ENCODE measurements at regions of chr2 and their contacts with region 1.

Region 1: DNA sequence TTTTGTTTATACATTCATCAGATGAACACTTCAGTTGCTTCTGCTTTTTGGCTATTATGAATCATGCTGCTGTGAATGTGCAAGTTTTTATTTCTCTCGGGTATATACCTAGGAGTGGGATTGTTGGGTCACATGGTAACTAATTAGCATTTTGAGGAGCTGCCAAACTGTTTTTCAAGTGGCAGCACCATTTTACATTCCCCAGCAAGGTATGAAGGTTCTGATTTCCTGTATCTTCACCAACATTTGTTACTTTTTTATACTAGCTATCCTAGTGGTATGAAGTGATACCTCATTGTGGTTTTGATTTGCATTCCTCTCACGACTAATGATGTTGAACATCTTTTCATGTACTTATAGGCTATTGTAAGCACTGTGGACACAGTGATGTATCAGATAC is 53.9 kb downstream of the DYNC1I2 start:
- DNase-seq: no peak
- H3K4me3 Mint-ChIP-seq: no peak overlapping the region
- H3K27ac Mint-ChIP-seq: no peak overlapping the region
- H3K4me1 Mint-ChIP-seq: peaks cover 11% of the 10 kb centered on the region
- H3K27me3 Mint-ChIP-seq: no peaks in the 10 kb centered on the region

Region 2: GRCh38 chr2:171568089-171568488 is 173.1 kb before region 1 on chr2:
- intact Hi-C with region 1: no loop called
- DNase-seq: no peak
- H3K4me3 Mint-ChIP-seq: no peak overlapping the region
- H3K27ac Mint-ChIP-seq: no peak overlapping the region
- H3K4me1 Mint-ChIP-seq: no peaks in the 10 kb centered on the region
- H3K27me3 Mint-ChIP-seq: peaks cover 11% of the 10 kb centered on the region

Region 3: GRCh38 chr2:171630812-171631626 is 110.2 kb before region 1 on chr2:
- intact Hi-C with region 1: no loop called
- DNase-seq: no peak
- H3K4me3 Mint-ChIP-seq: no peak overlapping the region
- H3K27ac Mint-ChIP-seq: no peak overlapping the region
- H3K4me1 Mint-ChIP-seq: no peaks in the 10 kb centered on the region
- H3K27me3 Mint-ChIP-seq: no peaks in the 10 kb centered on the region

Region 4: DNA sequence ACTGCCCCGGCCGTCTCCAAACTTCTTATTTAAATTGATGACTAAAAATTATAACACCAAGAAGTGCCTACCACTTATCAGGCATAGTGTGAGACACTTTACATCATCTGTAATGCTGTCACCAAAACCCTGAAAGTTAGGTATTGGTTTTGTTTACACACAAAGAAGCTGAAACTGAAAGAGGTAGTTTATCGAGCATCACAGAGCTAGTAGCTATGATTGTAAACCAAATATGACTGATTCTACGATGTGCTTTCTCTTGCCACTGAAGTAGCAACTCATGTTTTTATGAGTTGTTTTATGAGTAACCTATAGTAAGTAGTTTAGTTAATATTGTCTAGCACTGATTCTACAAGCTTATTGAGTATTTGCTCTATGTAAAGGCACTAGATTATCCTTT is 22.5 kb before region 1 on chr2:
- intact Hi-C with region 1: loop called (anchors 1 kb)
- DNase-seq: no peak
- H3K4me3 Mint-ChIP-seq: no peak overlapping the region
- H3K27ac Mint-ChIP-seq: no peak overlapping the region
- H3K4me1 Mint-ChIP-seq: peaks cover 9% of the 10 kb centered on the region
- H3K27me3 Mint-ChIP-seq: no peaks in the 10 kb centered on the region

Measured in activated T-helper 1 cell treated with anti-CD3 and anti-CD28 coated beads, Interleukin-12 subunit alpha, Interleukin-12 subunit beta, Interleukin-2, Interleukin-4 antibody, amounts not matched to agents 30 ng/mL and 10 ng/mL and 1 ng/mL, durations not matched to agents 14 hours and 24 hours and 36 hours (primary cell).